Colonic mucosa (tissue), 4 donors: ENCODE measurements at regions of chr1 and their contacts with region 1.

Region 1: GRCh38 chr1:229558571-229559335 is at the start of gene ABCB10:
- DNase-seq: peak; percentile 97
- H3K4me3 ChIP-seq: peak within 1 kb of the TSS; percentile 85
- H3K27ac ChIP-seq: peak within 1 kb of the TSS; percentile 93
- H3K4me1 ChIP-seq: peaks cover 6% of the 10 kb centered on the region
- H3K27me3 ChIP-seq: no peaks in the 10 kb centered on the region
- CTCF ChIP-seq: peak; percentile 71
- total RNA-seq, gene ABCB10: 22.3 to 24.7 TPM

Region 2: DNA sequence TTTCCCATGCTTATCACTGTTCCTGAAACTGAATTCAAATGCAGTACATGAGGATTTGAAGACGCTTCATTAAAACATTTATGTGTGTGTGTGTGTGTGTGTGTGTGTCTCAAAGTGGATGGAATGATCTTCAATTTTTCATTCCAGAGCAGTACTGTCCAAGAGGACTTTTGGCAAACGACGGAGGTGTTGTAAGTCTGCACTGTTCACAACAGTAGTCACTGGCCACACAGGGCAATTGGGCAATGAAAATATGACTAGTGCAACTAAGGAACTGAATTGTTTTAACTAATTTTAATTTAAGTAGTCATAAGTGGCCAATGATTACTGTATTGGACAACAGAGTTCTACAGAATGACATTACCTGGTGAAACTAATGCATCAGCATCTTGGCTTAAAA is 62.1 kb after region 1 on chr1:
- intact Hi-C with region 1: loop called (anchors 5 kb)
- DNase-seq: no peak
- H3K4me3 ChIP-seq: no peak overlapping the region
- H3K27ac ChIP-seq: no peak overlapping the region
- H3K4me1 ChIP-seq: peaks cover 7% of the 10 kb centered on the region
- H3K27me3 ChIP-seq: no peaks in the 10 kb centered on the region
- CTCF ChIP-seq: no peak

Region 3: GRCh38 chr1:229636042-229636441 is 77.3 kb after region 1 on chr1:
- intact Hi-C with region 1: no loop called
- DNase-seq: no peak
- H3K4me3 ChIP-seq: no peak overlapping the region
- H3K27ac ChIP-seq: no peak overlapping the region
- H3K4me1 ChIP-seq: no peaks in the 10 kb centered on the region
- H3K27me3 ChIP-seq: no peaks in the 10 kb centered on the region
- CTCF ChIP-seq: no peak

Region 4: GRCh38 chr1:230310381-230311163 is 751.8 kb after region 1 on chr1:
- intact Hi-C with region 1: loop called (anchors 10 kb)
- DNase-seq: peak; percentile 69
- H3K4me3 ChIP-seq: no peak overlapping the region
- H3K27ac ChIP-seq: no peak overlapping the region
- H3K4me1 ChIP-seq: no peaks in the 10 kb centered on the region
- H3K27me3 ChIP-seq: no peaks in the 10 kb centered on the region
- CTCF ChIP-seq: peak; percentile 81